Endothelial cell of umbilical vein (primary cell): ENCODE measurements at regions of chr20 and their contacts with region 1.

Region 1: DNA sequence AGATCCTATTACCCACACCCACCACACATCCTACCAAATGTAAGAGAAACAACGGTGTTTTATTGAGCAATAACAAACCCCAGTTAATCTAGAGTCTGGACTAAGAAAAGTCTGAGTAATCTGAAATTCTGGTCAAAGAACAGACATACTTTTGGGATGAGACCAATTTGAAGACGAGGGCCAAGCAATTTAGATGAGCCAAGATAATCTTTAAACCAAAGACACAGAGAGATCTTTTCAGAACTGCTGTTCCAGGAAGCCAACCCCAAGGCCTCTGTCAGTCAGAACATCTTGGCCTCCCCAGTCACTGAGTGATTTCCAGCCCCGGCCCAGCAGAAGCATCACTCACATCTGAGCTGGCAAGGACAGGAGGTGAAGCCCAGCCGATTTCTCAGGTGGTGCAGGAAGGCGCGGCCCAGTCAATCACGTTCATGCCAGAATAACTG is 118.5 kb upstream of the SYNDIG1 start:
- DNase-seq: no peak
- H3K4me3 ChIP-seq: no peak overlapping the region
- H3K27ac ChIP-seq: no peak overlapping the region
- H3K4me1 ChIP-seq: no peaks in the 10 kb centered on the region
- H3K27me3 ChIP-seq: no peaks in the 10 kb centered on the region
- CTCF ChIP-seq: no peak
- POLR2A ChIP-seq: no peak

Region 2: DNA sequence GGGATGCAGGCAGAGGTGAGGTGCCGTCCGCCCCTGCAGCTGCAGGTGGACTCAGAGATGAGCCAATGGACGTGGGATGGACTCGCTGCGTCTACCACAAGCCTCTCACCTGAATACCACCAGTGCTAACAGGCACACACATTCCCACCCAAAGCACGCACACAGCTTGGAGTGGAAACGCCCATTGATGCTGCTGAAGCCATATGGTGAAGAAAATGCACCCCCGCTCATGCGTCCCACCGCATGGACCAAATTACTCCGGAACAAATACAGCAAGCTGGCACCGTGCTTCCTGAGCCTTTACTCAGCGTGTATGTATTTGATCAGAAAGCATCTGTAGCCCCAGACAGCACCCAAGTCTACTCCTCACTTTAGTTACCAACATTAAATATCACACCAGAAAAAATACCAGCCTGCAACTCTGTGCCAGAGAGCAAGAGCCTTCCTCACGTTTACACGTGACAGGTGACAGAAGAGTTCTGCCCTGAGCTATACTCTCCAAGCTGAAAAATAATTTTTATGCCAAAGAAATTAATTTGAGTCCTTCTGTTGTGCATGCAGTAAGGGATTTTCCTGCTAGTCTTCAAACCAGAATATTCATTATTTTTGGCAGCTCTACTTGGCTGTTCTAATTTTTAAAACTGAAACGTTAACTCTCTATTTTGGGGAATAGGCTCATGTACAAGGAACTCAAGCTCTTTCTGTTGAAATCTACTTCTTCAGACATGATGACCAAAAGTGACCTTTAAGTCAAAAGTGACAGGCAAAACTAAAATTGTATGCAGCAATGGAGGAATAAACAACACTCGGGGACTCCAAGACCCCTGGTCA is 60.3 kb after region 1 on chr20:
- CTCF ChIA-PET with region 1: no interaction called
- POLR2A ChIA-PET with region 1: no interaction called
- dilution Hi-C with region 1: no loop called
- intact Hi-C with region 1: loop called (anchors 10 kb)
- DNase-seq: no peak
- H3K4me3 ChIP-seq: no peak overlapping the region
- H3K27ac ChIP-seq: no peak overlapping the region
- H3K4me1 ChIP-seq: no peaks in the 10 kb centered on the region
- H3K27me3 ChIP-seq: no peaks in the 10 kb centered on the region
- CTCF ChIP-seq: no peak
- POLR2A ChIP-seq: no peak